ENCODE measurements at regions of chr4 and their contacts with region 1.

Region 1: GRCh38 chr4:16916719-16917337 is 18.4 kb upstream of the LDB2 start:
- DNase-seq: peak; percentile 24 to 77 (median 58)
- ATAC-seq: peak; percentile 95
- H3K4me3 ChIP-seq: no peak overlapping the region
- H3K4me3 Mint-ChIP-seq: no peak overlapping the region
- H3K27ac ChIP-seq: no peak overlapping the region
- H3K27ac Mint-ChIP-seq: no peak overlapping the region
- H3K4me1 ChIP-seq: no peaks in the 10 kb centered on the region
- H3K4me1 Mint-ChIP-seq: peaks cover 0 to 4% (median 0%) of the 10 kb centered on the region in 7 donors
- H3K27me3 ChIP-seq: no peaks in the 10 kb centered on the region
- H3K27me3 Mint-ChIP-seq: peaks cover 0 to 4% (median 0%) of the 10 kb centered on the region in 5 donors

Region 2: GRCh38 chr4:16794816-16795445 is 121.9 kb before region 1 on chr4:
- CTCF ChIA-PET with region 1: no interaction called
- POLR2A ChIA-PET with region 1: no interaction called
- intact Hi-C with region 1: loop called (anchors 1 kb)
- DNase-seq: peak in 5 of 9 donors; percentile 3 to 32 (median 16)
- ATAC-seq: no peak
- H3K4me3 ChIP-seq: no peak overlapping the region
- H3K4me3 Mint-ChIP-seq: no peak overlapping the region
- H3K27ac ChIP-seq: no peak overlapping the region
- H3K27ac Mint-ChIP-seq: no peak overlapping the region
- H3K4me1 ChIP-seq: no peaks in the 10 kb centered on the region
- H3K4me1 Mint-ChIP-seq: peaks cover 0 to 4% (median 0%) of the 10 kb centered on the region in 7 donors
- H3K27me3 ChIP-seq: no peaks in the 10 kb centered on the region
- H3K27me3 Mint-ChIP-seq: peaks cover 0 to 9% (median 5%) of the 10 kb centered on the region in 5 donors

Region 3: DNA sequence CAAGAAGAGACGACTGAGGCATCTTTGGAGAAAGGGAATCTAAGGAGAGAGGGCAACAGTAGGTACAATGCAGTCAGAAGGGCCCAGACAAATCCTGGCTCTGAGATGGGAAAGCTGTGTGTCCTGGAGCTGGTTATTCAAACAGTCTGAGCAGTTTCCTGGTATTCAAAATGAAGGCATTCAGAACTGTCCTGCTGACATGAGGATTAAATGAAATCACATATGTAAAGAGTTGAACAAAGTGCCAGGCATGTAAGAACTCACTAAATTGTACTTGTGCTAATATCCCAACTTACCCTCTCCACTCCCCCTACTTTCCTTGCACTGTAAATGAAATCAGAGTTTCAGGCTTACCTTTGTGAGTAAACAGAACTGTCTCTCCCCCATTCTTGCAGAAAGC is 42.5 kb after region 1 on chr4:
- CTCF ChIA-PET with region 1: no interaction called
- POLR2A ChIA-PET with region 1: no interaction called
- intact Hi-C with region 1: no loop called
- DNase-seq: no peak
- ATAC-seq: no peak
- H3K4me3 ChIP-seq: no peak overlapping the region
- H3K4me3 Mint-ChIP-seq: no peak overlapping the region
- H3K27ac ChIP-seq: no peak overlapping the region
- H3K27ac Mint-ChIP-seq: no peak overlapping the region
- H3K4me1 ChIP-seq: no peaks in the 10 kb centered on the region
- H3K4me1 Mint-ChIP-seq: peaks cover 0 to 1% (median 0%) of the 10 kb centered on the region in 7 donors
- H3K27me3 ChIP-seq: no peaks in the 10 kb centered on the region
- H3K27me3 Mint-ChIP-seq: peaks cover 0 to 26% (median 7%) of the 10 kb centered on the region in 5 donors

Region 4: DNA sequence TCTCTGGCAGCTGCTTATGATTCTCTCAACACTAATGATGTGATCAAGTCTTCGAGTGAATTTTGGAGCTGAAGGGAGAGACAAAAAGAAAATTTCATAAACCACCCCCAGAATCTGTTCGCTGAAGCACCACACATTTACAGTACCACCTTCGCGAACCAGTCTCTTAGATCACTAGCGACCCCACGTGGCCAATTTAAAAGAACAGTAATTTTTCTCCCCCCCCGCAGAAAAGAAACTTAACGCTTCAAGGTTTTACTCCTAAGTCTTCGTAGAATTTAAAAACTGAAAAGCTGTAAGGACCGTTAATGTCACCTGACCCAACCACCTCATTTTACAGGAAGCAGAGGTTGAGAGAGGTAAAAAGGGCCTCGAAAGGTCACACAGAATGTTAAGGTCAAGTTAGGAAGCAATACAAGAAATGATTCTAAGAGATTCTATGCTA is 407.6 kb after region 1 on chr4:
- CTCF ChIA-PET with region 1: no interaction called
- POLR2A ChIA-PET with region 1: no interaction called
- intact Hi-C with region 1: loop called (anchors 1 kb)
- DNase-seq: peak in 7 of 9 donors; percentile 16 to 43 (median 31)
- ATAC-seq: peak; percentile 56
- H3K4me3 ChIP-seq: no peak overlapping the region
- H3K4me3 Mint-ChIP-seq: peak overlapping the region; percentile 22 to 77 (median 57)
- H3K27ac ChIP-seq: no peak overlapping the region
- H3K27ac Mint-ChIP-seq: peak overlapping the region in 5 of 9 donors; percentile 17 to 67 (median 42)
- H3K4me1 ChIP-seq: peaks cover 0 to 6% of the 10 kb centered on the region in 2 donors
- H3K4me1 Mint-ChIP-seq: peaks cover 8 to 14% (median 10%) of the 10 kb centered on the region in 7 donors
- H3K27me3 ChIP-seq: no peaks in the 10 kb centered on the region
- H3K27me3 Mint-ChIP-seq: peaks cover 0 to 4% (median 0%) of the 10 kb centered on the region in 5 donors